PC-9 (cell line): ENCODE measurements at regions of chr7 and their contacts with region 1.

Region 1: GRCh38 chr7:41375582-41375981 is 327.3 kb downstream of the INHBA start:
- DNase-seq: no peak
- H3K4me3 ChIP-seq: no peak overlapping the region
- H3K27ac ChIP-seq: no peak overlapping the region
- H3K4me1 ChIP-seq: no peaks in the 10 kb centered on the region
- H3K27me3 ChIP-seq: no peaks in the 10 kb centered on the region
- CTCF ChIP-seq: no peak

Region 2: GRCh38 chr7:40551685-40552576 is 823.7 kb before region 1 on chr7:
- CTCF ChIA-PET with region 1: no interaction called
- POLR2A ChIA-PET with region 1: interaction called, 19 read pairs
- intact Hi-C with region 1: no loop called
- DNase-seq: no peak
- H3K4me3 ChIP-seq: no peak overlapping the region
- H3K27ac ChIP-seq: no peak overlapping the region
- H3K4me1 ChIP-seq: no peaks in the 10 kb centered on the region
- H3K27me3 ChIP-seq: no peaks in the 10 kb centered on the region
- CTCF ChIP-seq: no peak